HCT116 (cell line): ENCODE measurements at regions of chr9 and their contacts with region 1.

Region 1: DNA sequence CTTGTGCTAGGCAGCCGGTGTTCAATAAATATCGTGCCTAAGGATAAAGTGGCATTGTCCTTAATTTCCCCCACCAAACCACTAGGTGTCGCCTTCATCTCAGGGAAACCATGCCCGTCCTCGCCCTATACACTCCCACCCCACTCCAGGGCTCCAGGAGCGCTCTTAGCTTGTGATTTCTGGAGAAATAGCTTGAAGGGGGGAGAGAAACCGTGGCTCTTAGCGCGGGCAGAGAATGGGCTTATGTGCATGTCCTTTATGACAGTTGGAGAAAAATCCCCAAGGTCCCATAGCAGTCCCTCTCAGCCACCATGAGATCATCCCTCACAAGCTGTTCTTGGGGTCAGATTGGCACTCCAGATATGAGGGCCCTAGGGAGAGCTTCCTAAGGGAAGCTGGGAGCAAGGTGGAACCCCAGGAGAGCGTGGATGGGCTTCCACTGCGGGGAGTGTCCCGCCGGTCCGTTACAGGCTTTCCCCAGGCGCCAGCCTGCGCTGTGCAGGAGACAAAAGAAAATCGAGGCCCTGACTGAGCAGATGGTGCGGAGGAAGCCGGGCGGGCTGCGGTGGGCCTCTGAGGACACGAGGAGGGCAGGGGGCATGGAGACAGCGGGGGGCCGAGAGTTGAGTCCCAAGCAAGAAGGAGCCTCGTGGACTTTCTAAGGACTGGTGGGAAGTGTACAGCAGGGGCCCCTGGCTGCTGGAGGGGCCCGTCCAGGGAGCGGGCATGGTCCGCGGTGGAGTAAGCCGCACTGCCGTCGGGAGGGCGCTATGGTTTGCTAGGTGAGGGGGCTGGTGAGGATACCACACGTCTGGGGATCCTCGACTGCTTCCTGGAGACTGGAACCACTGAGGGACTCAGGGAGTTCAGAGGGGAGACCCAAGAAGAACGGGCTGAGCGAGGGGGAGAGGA is 750 bp upstream of the NPR2 start:
- DNase-seq: no peak
- ATAC-seq: peak; percentile 96
- H3K4me3 ChIP-seq: no peak overlapping the region
- H3K27ac ChIP-seq: no peak overlapping the region
- H3K4me1 ChIP-seq: peaks cover 0 to 7% of the 10 kb centered on the region in 2 experiments; a peak in 1 of 4 replicates
- H3K27me3 ChIP-seq: no peaks in the 10 kb centered on the region
- CTCF ChIP-seq: peak; percentile 81 to 87 (median 86)
- POLR2A ChIP-seq: no peak
- RAD21 ChIP-seq: peak; percentile 89

Region 2: GRCh38 chr9:35771943-35772342 is 18.7 kb before region 1 on chr9:
- CTCF ChIA-PET with region 1: interaction called, 12 read pairs
- POLR2A ChIA-PET with region 1: no interaction called
- RAD21 ChIA-PET with region 1: no interaction called
- intact Hi-C with region 1: no loop called
- DNase-seq: no peak
- ATAC-seq: no peak
- H3K4me3 ChIP-seq: no peak overlapping the region
- H3K27ac ChIP-seq: no peak overlapping the region
- H3K4me1 ChIP-seq: peaks cover 2 to 6% of the 10 kb centered on the region in 2 experiments; a peak in 2 of 4 replicates
- H3K27me3 ChIP-seq: no peaks in the 10 kb centered on the region
- CTCF ChIP-seq: no peak
- POLR2A ChIP-seq: no peak
- RAD21 ChIP-seq: no peak

Region 3: DNA sequence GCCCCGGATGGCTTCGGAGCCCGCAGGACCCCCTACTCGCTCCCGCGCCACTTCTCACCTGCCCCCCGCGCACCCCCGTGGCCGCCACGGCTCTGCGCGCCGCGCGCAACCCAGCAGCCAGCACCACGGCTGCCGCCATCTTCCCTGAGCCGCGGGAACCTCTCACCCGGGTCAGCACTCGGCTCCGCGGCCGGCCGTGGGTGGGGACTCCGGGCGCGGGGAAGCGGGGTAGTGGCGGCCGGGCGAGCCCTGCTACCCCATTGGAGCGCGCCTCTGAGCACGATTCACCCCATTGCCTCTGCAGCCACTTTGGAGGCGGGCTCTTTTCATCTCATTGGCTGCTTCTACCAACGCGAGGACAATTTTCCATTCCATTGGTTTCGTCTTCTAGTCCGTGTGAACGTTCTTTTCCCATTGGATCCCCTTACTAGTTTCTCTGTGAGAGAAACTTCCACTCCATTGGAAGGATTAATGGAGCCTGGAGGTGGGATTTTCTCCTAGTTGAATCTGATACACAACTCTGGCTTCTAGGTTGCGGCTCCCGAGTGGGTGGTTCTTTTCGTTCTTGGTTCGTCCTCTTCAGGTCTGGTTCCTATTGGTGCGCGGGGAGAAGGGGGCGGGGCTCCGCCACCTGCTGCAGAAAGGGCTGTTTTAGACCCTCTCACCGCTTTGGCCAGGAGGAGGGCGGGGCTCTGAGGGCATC is 24.4 kb after region 1 on chr9 and contains the start of gene HINT2:
- CTCF ChIA-PET with region 1: interaction called, 13 read pairs
- POLR2A ChIA-PET with region 1: interaction called, 4 read pairs
- RAD21 ChIA-PET with region 1: no interaction called
- intact Hi-C with region 1: no loop called
- DNase-seq: peak; percentile 98
- ATAC-seq: peak; percentile 90
- H3K4me3 ChIP-seq: peak within 1 kb of the TSS; percentile 86 to 88
- H3K27ac ChIP-seq: peak within 1 kb of the TSS; percentile 97
- H3K4me1 ChIP-seq: peaks cover 7 to 17% of the 10 kb centered on the region in 2 experiments; a peak in 3 of 4 replicates
- H3K27me3 ChIP-seq: no peaks in the 10 kb centered on the region
- CTCF ChIP-seq: no peak
- POLR2A ChIP-seq: peak; percentile 77
- RAD21 ChIP-seq: no peak
- total RNA-seq, gene HINT2: 49.0 TPM

Region 4: GRCh38 chr9:35835216-35835632 is 44.6 kb after region 1 on chr9:
- CTCF ChIA-PET with region 1: no interaction called
- POLR2A ChIA-PET with region 1: no interaction called
- RAD21 ChIA-PET with region 1: no interaction called
- intact Hi-C with region 1: loop called (anchors 2 kb)
- DNase-seq: no peak
- ATAC-seq: peak; percentile 87
- H3K4me3 ChIP-seq: no peak overlapping the region
- H3K27ac ChIP-seq: no peak overlapping the region
- H3K4me1 ChIP-seq: peaks cover 0 to 11% of the 10 kb centered on the region in 2 experiments; a peak in 1 of 4 replicates
- H3K27me3 ChIP-seq: no peaks in the 10 kb centered on the region
- CTCF ChIP-seq: peak; percentile 22 to 54 (median 48); a peak in 5 of 6 replicates
- POLR2A ChIP-seq: no peak
- RAD21 ChIP-seq: no peak; the same call in 1 of the 2 replicates

Region 5: GRCh38 chr9:35882263-35882848 is 91.7 kb after region 1 on chr9:
- CTCF ChIA-PET with region 1: interaction called, 46 read pairs
- POLR2A ChIA-PET with region 1: no interaction called
- RAD21 ChIA-PET with region 1: interaction called, 3 to 8 read pairs
- intact Hi-C with region 1: loop called (anchors 1 kb)
- DNase-seq: peak; percentile 71
- ATAC-seq: peak; percentile 95
- H3K4me3 ChIP-seq: no peak overlapping the region
- H3K27ac ChIP-seq: no peak overlapping the region
- H3K4me1 ChIP-seq: peaks cover 0 to 3% of the 10 kb centered on the region in 2 experiments; a peak in 1 of 4 replicates
- H3K27me3 ChIP-seq: no peaks in the 10 kb centered on the region
- CTCF ChIP-seq: peak; percentile 93 to 99 (median 97)
- POLR2A ChIP-seq: no peak
- RAD21 ChIP-seq: peak; percentile 88

Region 6: GRCh38 chr9:35910613-35911359 is 120.1 kb after region 1 on chr9:
- CTCF ChIA-PET with region 1: interaction called, 8 read pairs
- POLR2A ChIA-PET with region 1: no interaction called
- RAD21 ChIA-PET with region 1: no interaction called
- intact Hi-C with region 1: loop called (anchors 1 kb)
- DNase-seq: peak; percentile 66
- ATAC-seq: peak; percentile 58
- H3K4me3 ChIP-seq: no peak overlapping the region
- H3K27ac ChIP-seq: no peak overlapping the region; the same call in 1 of the 2 replicates
- H3K4me1 ChIP-seq: peaks cover 36 to 55% of the 10 kb centered on the region in 2 experiments
- H3K27me3 ChIP-seq: no peaks in the 10 kb centered on the region
- CTCF ChIP-seq: peak in 2 of 3 experiments; percentile 72 to 74; a peak in 4 of 6 replicates
- POLR2A ChIP-seq: no peak
- RAD21 ChIP-seq: no peak